Activated naive CD4-positive, alpha-beta T cell treated with anti-CD3 and anti-CD28 coated beads for 36 hours (primary cell): ENCODE measurements at regions of chr2 and their contacts with region 1.

Region 1: GRCh38 chr2:102615622-102616436 is 3.5 kb upstream of the SLC9A2 start:
- DNase-seq: peak; percentile 72
- H3K4me3 Mint-ChIP-seq: no peak overlapping the region
- H3K27ac Mint-ChIP-seq: no peak overlapping the region
- H3K4me1 Mint-ChIP-seq: peaks cover 12% of the 10 kb centered on the region
- H3K27me3 Mint-ChIP-seq: peaks cover 41% of the 10 kb centered on the region

Region 2: DNA sequence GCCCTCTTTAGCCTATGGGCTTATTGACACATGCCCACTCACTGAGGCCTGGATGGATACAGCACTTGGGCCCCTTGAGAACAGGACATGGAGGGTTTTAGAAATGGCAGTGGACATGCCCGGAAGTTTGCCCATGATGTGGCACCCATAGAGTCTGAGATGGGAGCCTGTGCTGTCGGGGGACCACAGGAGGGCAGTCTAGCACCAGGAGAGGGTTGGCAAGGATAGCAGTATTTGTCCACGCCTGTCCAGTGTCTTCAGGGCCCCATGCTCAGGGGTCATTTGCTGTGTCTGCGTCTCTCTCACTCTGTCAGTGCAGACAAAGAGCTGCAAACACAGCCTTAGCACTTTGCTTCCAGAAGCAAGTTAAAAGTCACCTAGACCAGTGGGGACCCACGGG is 380.3 kb before region 1 on chr2:
- CTCF ChIA-PET with region 1: no interaction called
- intact Hi-C with region 1: loop called (anchors 2 kb)
- DNase-seq: peak; percentile 68
- H3K4me3 Mint-ChIP-seq: no peak overlapping the region
- H3K27ac Mint-ChIP-seq: no peak overlapping the region
- H3K4me1 Mint-ChIP-seq: peaks cover 43% of the 10 kb centered on the region
- H3K27me3 Mint-ChIP-seq: no peaks in the 10 kb centered on the region

Region 3: GRCh38 chr2:102467514-102467913 is 148.3 kb before region 1 on chr2:
- CTCF ChIA-PET with region 1: interaction called, 53 read pairs
- intact Hi-C with region 1: no loop called
- DNase-seq: no peak
- H3K4me3 Mint-ChIP-seq: no peak overlapping the region
- H3K27ac Mint-ChIP-seq: no peak overlapping the region
- H3K4me1 Mint-ChIP-seq: no peaks in the 10 kb centered on the region
- H3K27me3 Mint-ChIP-seq: peaks cover 33% of the 10 kb centered on the region

Region 4: GRCh38 chr2:102703748-102704147 is 87.9 kb after region 1 on chr2:
- CTCF ChIA-PET with region 1: interaction called, 14 read pairs
- intact Hi-C with region 1: loop called (anchors 1 kb)
- DNase-seq: peak; percentile 58
- H3K4me3 Mint-ChIP-seq: no peak overlapping the region
- H3K27ac Mint-ChIP-seq: no peak overlapping the region
- H3K4me1 Mint-ChIP-seq: no peaks in the 10 kb centered on the region
- H3K27me3 Mint-ChIP-seq: peaks cover 5% of the 10 kb centered on the region